Mammary epithelial cell (primary cell): ENCODE measurements at regions of chr14 and their contacts with region 1.

Region 1: DNA sequence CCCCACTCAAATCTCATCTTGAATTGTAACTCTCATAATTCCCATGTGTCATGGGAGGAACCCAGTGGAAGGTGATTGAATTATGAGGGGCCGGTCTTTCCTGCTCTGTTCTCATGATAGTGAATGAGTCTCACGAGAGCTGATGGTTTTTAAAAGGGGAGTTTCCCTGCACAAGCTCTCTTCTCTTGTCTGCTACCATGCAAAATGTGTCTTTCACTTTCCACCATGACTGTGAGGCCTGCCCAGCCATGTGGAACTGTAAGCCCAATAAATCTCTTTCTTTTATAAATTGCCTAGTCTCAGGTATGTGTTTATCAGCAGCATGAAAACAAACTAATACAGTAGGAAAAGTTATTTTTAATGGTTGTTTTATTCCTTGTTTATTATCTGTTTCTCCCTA is 146.0 kb downstream of the FSCB start:
- DNase-seq: no peak
- H3K4me3 ChIP-seq: no peak overlapping the region
- H3K27ac ChIP-seq: no peak overlapping the region
- H3K4me1 ChIP-seq: no peaks in the 10 kb centered on the region
- H3K27me3 ChIP-seq: no peaks in the 10 kb centered on the region
- CTCF ChIP-seq: no peak

Region 2: DNA sequence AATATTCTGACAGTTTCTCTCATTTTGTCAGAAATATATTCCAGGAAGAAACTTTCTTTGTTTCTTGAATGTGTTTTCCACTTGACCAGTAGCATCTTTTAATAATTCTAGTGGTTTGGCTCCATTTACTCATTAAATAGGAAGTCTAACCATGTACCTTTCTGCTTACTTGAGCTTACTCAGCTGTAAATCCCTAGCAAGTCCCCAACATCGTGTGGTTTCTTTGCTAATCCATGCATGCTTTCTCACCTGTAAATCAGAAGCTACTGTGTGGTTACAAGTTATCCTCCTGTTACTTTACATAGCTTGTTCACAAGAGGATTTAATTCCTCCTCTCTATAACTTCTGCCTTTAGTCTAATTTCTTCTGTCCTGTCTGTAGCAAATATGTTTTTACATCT is 81.7 kb before region 1 on chr14:
- CTCF ChIA-PET with region 1: no interaction called
- dilution Hi-C with region 1: no loop called
- in situ Hi-C with region 1: no loop called
- intact Hi-C with region 1: no loop called
- DNase-seq: no peak
- H3K4me3 ChIP-seq: no peak overlapping the region
- H3K27ac ChIP-seq: no peak overlapping the region
- H3K4me1 ChIP-seq: no peaks in the 10 kb centered on the region
- H3K27me3 ChIP-seq: no peaks in the 10 kb centered on the region
- CTCF ChIP-seq: no peak

Region 3: GRCh38 chr14:44339231-44339630 is 21.9 kb before region 1 on chr14:
- CTCF ChIA-PET with region 1: interaction called, 15 read pairs
- dilution Hi-C with region 1: no loop called
- in situ Hi-C with region 1: no loop called
- intact Hi-C with region 1: no loop called
- DNase-seq: peak; percentile 76
- H3K4me3 ChIP-seq: no peak overlapping the region
- H3K27ac ChIP-seq: peak overlapping the region; percentile 58
- H3K4me1 ChIP-seq: peaks cover 6% of the 10 kb centered on the region
- H3K27me3 ChIP-seq: no peaks in the 10 kb centered on the region
- CTCF ChIP-seq: no peak

Region 4: DNA sequence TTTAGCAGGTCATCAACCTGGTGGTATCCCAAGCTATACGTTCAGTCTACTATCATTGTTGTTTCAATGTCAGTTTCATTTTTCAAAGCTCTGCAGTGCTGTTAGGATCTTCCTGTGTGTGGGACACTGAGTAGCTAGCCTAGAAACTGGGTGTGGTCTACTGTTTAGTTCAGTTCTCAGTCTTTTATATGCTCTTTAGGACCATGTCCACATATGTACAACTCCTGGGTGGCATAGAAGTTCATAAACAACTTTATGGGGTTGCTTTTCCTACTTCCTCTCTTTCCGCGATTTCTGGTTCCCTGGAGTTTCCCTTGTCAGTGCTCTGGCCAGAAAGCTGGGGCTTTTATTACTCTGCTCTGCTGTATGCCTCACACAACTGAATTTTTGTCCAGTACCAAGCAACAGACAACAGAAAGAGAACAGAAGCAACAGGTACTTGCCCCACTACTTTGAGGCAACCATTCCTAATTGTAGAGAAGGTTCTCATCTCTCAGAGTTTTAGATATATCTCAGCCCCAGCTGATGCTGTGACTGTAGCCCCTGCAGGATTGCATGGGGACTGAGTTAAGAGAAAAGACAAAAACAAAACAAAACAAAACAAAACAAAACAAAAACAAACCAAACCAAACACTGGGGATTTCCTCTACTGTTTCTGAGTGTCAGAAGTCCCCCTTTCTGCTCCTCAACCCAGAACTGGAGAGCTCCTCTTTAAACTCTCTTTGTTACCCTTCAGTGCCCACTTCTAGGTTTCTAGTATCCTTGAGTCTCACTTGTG is 861.6 kb after region 1 on chr14:
- CTCF ChIA-PET with region 1: no interaction called
- dilution Hi-C with region 1: no loop called
- in situ Hi-C with region 1: no loop called
- intact Hi-C with region 1: no loop called
- DNase-seq: no peak
- H3K4me3 ChIP-seq: no peak overlapping the region
- H3K27ac ChIP-seq: no peak overlapping the region
- H3K4me1 ChIP-seq: no peaks in the 10 kb centered on the region
- H3K27me3 ChIP-seq: no peaks in the 10 kb centered on the region
- CTCF ChIP-seq: no peak